Spleen (tissue), 13 donors: ENCODE measurements at regions of chr2 and their contacts with region 1.

Region 1: DNA sequence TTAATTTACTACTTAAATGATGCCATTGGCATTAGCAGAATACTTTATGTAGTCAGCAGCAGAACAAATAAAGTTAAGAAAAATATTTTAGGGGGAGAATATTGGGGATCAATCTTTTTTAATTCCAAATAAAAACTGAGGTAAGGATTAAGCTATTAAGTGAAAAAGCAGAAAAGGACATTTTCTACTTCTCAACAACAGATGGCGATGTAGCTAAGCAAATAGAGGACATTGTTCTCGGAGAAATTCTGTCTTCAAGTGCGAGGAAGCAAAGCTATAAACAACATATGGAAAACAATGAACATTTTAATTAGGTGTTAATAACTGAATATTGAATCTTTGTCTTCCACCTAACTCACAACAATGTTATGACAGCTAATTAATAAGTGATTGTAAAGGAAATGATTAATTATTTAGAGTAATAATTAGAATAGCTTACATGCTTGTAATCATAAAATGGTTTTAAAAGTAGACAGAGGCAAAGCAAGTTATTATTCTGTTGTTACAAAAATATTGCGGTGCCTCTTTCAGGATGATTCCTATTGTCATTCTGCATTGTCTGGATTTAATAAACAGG is 32.9 kb upstream of the CCDC93 start:
- DNase-seq: no peak
- H3K4me3 ChIP-seq: no peak overlapping the region
- H3K27ac ChIP-seq: no peak overlapping the region
- H3K4me1 ChIP-seq: peaks cover 0 to 36% (median 12%) of the 10 kb centered on the region in 6 donors
- H3K27me3 ChIP-seq: peaks cover 0 to 30% (median 0%) of the 10 kb centered on the region in 7 donors
- CTCF ChIP-seq: peak; percentile 32 to 69 (median 62)
- POLR2A ChIP-seq: no peak

Region 2: GRCh38 chr2:117943013-117943672 is 103.6 kb before region 1 on chr2:
- intact Hi-C with region 1: no loop called
- DNase-seq: no peak
- H3K4me3 ChIP-seq: no peak overlapping the region
- H3K27ac ChIP-seq: peak overlapping the region in 2 of 8 donors; percentile 37 to 40
- H3K4me1 ChIP-seq: peaks cover 0 to 10% (median 0%) of the 10 kb centered on the region in 6 donors
- H3K27me3 ChIP-seq: no peaks in the 10 kb centered on the region
- CTCF ChIP-seq: no peak
- POLR2A ChIP-seq: no peak

Region 3: DNA sequence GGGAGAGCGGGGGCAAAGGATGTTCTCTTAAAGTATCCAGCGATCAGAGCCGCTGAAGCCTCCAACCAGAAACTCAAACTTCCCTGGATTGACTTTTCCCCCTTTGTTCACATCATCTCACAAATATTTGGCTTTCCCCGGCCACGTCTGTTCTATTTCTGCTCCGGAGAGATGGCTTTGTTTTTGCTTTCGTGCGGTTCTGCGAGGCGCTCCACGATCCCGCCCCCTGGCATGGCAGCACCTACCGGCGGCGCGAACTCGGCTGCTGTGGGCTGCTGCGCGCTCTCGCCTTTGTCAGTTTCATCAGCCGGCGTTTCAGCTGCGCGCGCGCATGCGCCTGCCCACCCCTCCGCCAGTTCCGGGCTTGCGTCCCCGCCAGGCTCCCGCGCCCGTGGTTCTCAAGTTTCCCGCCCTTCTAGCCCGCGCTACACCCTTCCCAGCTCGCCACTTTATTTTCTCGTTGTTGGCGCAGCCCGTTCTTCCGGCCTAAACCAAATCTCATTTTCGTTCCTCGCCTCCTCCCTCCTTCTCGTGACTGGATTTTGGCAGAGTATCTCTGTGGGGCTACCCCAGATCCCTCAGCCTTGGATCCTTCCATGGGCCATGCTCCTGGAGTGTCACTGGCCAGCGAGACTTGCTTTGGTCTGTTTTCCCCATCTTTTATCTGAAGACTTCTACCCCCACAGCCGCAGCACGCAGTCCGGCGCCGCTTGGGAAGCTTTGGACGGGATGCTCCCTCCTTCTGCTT is 139.6 kb after region 1 on chr2:
- intact Hi-C with region 1: loop called (anchors 10 kb)
- DNase-seq: peak; percentile 95
- H3K4me3 ChIP-seq: peak overlapping the region; percentile 33 to 86 (median 56)
- H3K27ac ChIP-seq: peak overlapping the region; percentile 64 to 91 (median 86)
- H3K4me1 ChIP-seq: peaks cover 0 to 22% (median 20%) of the 10 kb centered on the region in 6 donors
- H3K27me3 ChIP-seq: no peaks in the 10 kb centered on the region
- CTCF ChIP-seq: peak in 5 of 11 experiments; percentile 13 to 39 (median 27)
- POLR2A ChIP-seq: peak in 1 of 3 donors; percentile 95

Region 4: DNA sequence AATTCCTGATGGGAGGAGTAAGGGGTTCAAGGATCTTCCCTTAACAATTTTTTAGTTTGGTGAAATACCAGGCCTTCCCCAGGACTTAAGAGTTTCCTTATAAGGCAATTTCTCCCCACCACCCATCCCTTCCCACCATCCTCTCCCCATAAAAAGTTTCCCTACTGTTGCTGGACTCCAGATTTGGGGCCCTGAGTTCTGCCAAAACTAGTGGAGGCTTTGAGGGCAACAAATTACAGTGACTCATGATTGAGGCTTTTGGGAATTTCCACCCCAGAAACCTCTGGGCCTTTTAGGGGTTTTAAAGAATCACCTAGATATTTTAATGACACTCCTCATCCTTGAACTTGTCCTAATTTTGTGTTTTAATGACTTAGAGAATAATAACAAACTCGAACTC is 815.0 kb after region 1 on chr2:
- intact Hi-C with region 1: loop called (anchors 5 kb)
- DNase-seq: no peak
- H3K4me3 ChIP-seq: no peak overlapping the region
- H3K27ac ChIP-seq: no peak overlapping the region
- H3K4me1 ChIP-seq: peaks cover 3 to 20% (median 13%) of the 10 kb centered on the region in 6 donors
- H3K27me3 ChIP-seq: peaks cover 4 to 94% (median 50%) of the 10 kb centered on the region in 7 donors
- CTCF ChIP-seq: no peak
- POLR2A ChIP-seq: no peak